Head of caudate nucleus (tissue), 42 donors: ENCODE measurements at regions of chr5 and their contacts with region 1.

Region 1: DNA sequence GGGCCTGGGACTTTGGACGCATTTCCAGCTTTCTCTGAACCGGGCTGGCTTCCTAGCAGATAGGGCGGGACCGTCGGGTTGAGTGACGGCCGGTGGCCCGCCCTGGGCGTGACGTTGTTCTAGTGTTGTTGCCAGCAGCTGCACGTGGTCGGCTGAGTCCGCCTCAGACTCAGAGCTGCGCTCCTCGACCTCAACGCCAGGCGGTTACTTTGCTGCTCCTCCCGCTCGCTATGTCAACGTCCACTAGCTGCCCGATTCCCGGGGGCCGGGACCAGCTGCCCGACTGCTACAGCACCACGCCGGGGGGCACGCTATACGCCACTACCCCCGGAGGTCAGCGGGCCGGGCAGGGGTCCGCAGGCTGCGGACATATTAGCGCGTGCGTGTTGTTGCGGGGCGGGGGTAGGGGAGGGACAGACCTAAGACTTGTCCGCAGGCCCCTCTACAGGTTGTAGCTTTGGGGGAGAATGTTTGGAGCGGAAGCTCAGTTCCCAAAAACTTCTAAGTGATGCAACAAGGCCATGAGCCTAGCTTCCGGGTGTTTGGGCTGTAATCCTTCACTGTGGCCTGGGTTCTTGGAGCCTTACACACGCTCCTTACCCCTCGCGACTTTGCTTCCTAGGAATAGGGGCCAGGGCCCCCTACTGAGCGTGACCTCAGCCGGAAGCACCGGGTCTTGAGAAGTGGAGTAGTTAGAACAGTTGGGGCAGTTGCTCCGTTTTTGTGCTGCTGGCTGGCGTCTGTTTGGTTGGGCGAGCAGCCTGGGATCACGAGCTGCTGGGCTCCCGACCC is at the start of gene EIF4EBP3:
- DNase-seq: peak; percentile 93 to 99 (median 98)

Region 2: GRCh38 chr5:139998837-139999236 is 548.9 kb before region 1 on chr5:
- intact Hi-C with region 1: no loop called
- DNase-seq: no peak

Region 3: GRCh38 chr5:140401362-140402257 is 146.1 kb before region 1 on chr5 and contains the start of gene ANKHD1:
- intact Hi-C with region 1: loop called (anchors 5 kb)
- DNase-seq: peak; percentile 96 to 100 (median 99)